ENCODE measurements at regions of chr12 and their contacts with region 1.

Region 1: DNA sequence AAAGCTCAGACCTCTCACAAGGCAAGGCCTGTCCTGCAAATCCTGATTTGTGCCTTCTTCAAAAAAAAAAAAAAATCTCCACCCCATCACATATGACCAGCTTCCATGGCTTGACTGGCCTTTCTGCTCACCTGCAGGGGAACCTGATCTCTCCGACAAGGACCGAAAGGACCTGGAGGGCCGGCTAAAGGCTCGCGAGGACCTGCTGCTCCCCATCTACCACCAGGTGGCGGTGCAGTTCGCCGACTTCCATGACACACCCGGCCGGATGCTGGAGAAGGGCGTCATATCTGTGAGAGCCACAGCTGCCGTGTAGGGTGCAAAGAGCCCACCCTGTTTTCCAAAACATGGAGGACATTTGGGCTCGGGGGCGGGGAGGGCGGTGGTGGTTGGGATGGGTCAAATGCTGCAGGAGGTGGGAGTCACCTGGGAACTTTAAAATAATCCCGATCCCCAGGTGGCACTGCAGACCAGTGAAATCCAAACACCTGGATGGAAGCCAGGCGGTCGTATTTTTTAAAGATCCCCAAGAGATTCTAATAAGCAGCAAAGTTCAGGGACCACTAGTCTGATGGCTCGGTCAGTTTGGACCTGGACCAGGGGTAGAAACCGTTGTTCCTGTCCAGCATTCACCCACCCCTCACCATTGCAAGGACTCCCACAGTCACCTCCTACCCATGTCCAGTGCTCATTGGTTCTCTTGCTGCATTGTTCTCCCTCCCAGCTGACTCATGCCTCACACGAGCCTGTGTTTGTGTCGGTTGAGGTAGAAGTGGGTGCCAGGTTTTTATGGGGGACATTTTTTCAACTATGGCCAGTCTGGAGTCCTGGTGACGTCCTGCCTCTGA is 44.8 kb downstream of the FOXN4 start:
- DNase-seq: peak; percentile 84
- H3K4me3 Mint-ChIP-seq: no peak overlapping the region
- H3K27ac Mint-ChIP-seq: no peak overlapping the region
- H3K4me1 Mint-ChIP-seq: peaks cover 8% of the 10 kb centered on the region
- H3K27me3 Mint-ChIP-seq: no peaks in the 10 kb centered on the region
- CTCF ChIP-seq: peak; percentile 85

Region 2: GRCh38 chr12:108542320-108542719 is 722.0 kb before region 1 on chr12:
- CTCF ChIA-PET with region 1: no interaction called
- POLR2A ChIA-PET with region 1: no interaction called
- intact Hi-C with region 1: no loop called
- DNase-seq: no peak
- H3K4me3 Mint-ChIP-seq: no peak overlapping the region
- H3K27ac Mint-ChIP-seq: no peak overlapping the region
- H3K4me1 Mint-ChIP-seq: peaks cover 8% of the 10 kb centered on the region
- H3K27me3 Mint-ChIP-seq: no peaks in the 10 kb centered on the region
- CTCF ChIP-seq: no peak

Region 3: GRCh38 chr12:109209082-109209481 is 55.2 kb before region 1 on chr12:
- CTCF ChIA-PET with region 1: no interaction called
- POLR2A ChIA-PET with region 1: no interaction called
- intact Hi-C with region 1: no loop called
- DNase-seq: no peak
- H3K4me3 Mint-ChIP-seq: no peak overlapping the region
- H3K27ac Mint-ChIP-seq: no peak overlapping the region
- H3K4me1 Mint-ChIP-seq: no peaks in the 10 kb centered on the region
- H3K27me3 Mint-ChIP-seq: no peaks in the 10 kb centered on the region
- CTCF ChIP-seq: no peak

Region 4: DNA sequence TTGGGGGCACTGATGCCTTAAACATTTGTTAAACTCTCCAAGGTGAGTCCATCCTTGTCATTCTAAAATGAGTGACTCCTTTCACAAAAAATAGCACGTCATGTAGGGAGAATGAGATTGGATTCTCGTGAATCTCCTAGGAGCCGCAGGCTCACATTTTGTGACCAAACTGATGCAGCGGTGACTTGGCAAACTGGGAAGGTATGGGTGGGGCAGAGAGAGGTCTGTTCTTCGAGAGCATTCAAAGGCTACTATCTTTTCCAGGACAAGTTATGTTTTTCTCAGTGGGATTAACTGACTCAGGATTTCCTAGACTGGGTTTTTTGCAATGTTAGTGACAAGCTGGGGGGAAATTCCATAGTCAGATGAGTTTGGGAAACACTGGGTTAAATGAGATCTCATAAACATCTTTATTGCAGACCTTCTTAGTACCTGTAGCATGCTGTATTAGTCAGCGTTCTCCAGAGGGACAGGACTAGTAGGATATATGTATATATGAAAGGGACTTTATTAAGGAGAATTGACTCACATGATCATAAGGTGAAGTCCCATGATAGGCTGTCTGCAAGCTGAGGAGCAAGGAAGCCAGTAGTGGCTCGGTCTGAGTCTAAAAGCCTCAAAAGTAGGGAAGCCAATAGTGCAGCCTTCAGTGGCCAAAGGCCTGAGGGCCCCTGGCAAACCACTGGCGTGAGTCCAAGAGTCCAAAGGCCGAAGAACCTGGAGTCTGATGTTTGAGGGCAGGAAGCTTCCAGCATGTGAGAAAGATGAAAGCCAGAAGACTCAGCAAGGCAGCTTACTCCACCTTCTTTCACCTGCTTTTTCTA is 16.3 kb before region 1 on chr12:
- CTCF ChIA-PET with region 1: interaction called, 30 read pairs
- POLR2A ChIA-PET with region 1: no interaction called
- intact Hi-C with region 1: no loop called
- DNase-seq: no peak
- H3K4me3 Mint-ChIP-seq: no peak overlapping the region
- H3K27ac Mint-ChIP-seq: no peak overlapping the region
- H3K4me1 Mint-ChIP-seq: no peaks in the 10 kb centered on the region
- H3K27me3 Mint-ChIP-seq: no peaks in the 10 kb centered on the region
- CTCF ChIP-seq: no peak

Region 5: DNA sequence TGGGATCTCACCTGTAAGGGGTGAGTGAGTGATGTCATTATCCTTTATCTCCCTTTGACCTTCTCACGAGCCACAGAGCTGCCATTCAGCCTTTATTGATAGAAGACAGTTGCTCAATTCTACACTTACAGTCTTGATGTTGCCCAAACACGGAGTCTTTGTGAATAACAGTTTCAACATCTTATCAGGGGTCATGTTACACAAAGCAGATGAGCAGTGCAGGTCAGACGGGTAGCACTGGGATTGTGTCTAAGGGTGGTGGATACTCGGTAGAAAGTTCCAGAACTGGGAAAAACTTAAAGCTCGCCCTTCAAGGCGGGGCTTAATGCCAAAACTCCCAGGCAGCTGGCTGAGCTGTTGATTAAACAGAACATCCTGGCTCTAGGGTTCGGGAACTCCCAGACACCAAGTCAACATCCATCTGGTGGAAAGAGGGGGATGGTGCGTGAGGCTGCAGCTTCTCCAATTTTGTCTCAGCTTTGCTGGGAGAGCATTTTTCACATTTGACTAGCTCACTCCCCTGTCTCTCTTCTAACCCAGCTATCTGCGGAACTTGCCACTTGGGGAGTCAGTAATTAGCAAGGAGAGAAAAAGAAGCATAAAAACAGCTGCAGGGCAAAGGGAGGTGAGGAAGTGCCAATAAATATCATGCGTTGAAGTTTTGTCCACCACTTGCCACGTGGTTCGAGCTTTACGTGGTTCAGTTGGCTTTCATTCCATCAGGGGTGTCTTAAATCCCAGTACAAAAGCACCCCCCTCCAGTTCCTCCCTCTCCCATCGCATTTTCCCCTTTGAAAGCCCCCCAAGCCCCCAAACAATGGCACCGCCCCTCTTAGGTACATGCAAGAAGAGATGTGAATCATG is 13.8 kb after region 1 on chr12:
- CTCF ChIA-PET with region 1: interaction called, 30 read pairs
- POLR2A ChIA-PET with region 1: no interaction called
- intact Hi-C with region 1: no loop called
- DNase-seq: peak; percentile 66
- H3K4me3 Mint-ChIP-seq: no peak overlapping the region
- H3K27ac Mint-ChIP-seq: no peak overlapping the region
- H3K4me1 Mint-ChIP-seq: peaks cover 5% of the 10 kb centered on the region
- H3K27me3 Mint-ChIP-seq: peaks cover 11% of the 10 kb centered on the region
- CTCF ChIP-seq: no peak

Region 6: GRCh38 chr12:109377139-109377685 is 112.9 kb after region 1 on chr12:
- CTCF ChIA-PET with region 1: interaction called, 125 read pairs
- POLR2A ChIA-PET with region 1: no interaction called
- intact Hi-C with region 1: no loop called
- DNase-seq: peak; percentile 28
- H3K4me3 Mint-ChIP-seq: no peak overlapping the region
- H3K27ac Mint-ChIP-seq: no peak overlapping the region
- H3K4me1 Mint-ChIP-seq: no peaks in the 10 kb centered on the region
- H3K27me3 Mint-ChIP-seq: peaks cover 75% of the 10 kb centered on the region
- CTCF ChIP-seq: no peak

Region 7: GRCh38 chr12:109385339-109386067 is 121.2 kb after region 1 on chr12:
- CTCF ChIA-PET with region 1: interaction called, 125 read pairs
- POLR2A ChIA-PET with region 1: interaction called, 13 read pairs
- intact Hi-C with region 1: loop called (anchors 1 kb)
- DNase-seq: peak; percentile 52
- H3K4me3 Mint-ChIP-seq: peak overlapping the region; percentile 41
- H3K27ac Mint-ChIP-seq: peak overlapping the region; percentile 86
- H3K4me1 Mint-ChIP-seq: peaks cover 11% of the 10 kb centered on the region
- H3K27me3 Mint-ChIP-seq: peaks cover 23% of the 10 kb centered on the region
- CTCF ChIP-seq: peak; percentile 67

Region 8: DNA sequence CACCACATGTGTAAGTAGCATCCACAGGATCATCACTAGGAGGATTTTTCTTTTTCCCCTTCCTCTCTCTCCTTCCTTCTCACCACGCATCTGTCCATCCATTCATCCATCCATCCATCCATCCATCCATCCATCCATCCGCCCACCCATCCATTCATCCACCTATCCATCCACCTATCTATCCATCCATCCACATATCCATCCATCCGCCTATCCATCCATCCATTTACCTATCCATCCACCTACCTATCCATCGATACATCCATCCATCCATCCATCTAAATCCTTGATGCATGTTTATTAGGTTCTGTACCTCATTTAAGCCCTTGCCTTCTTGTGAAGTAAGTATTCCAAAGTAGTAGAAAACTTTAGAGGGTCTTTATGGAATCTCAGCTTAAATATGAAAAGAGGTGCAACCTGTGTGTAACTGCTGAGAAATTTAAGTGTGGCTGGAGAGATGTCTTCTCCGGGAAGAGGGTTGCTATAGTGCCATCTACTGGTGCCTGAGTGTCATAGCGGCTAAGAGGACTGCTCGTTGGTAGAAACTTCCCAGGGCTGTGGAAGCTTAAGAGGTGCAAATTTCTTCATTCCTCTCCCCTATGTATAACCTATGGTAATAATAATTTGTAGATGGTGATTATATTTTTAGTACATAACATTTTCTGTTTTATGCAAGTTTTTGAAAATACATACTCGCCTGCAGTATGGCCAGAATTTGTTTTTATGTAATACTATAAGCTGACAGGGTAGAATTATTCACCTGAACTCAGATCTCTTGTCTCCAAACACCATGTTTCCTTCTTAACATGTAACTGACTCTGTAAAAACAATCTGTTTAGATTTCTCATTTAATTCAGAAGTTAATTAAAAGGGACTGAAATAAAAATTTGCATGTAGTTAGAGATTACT is 129.4 kb after region 1 on chr12:
- CTCF ChIA-PET with region 1: interaction called, 116 read pairs
- POLR2A ChIA-PET with region 1: interaction called, 6 read pairs
- intact Hi-C with region 1: loop called (anchors 2 kb)
- DNase-seq: peak; percentile 68
- H3K4me3 Mint-ChIP-seq: no peak overlapping the region
- H3K27ac Mint-ChIP-seq: no peak overlapping the region
- H3K4me1 Mint-ChIP-seq: no peaks in the 10 kb centered on the region
- H3K27me3 Mint-ChIP-seq: peaks cover 51% of the 10 kb centered on the region
- CTCF ChIP-seq: peak; percentile 90

Measured in MCF 10A (cell line).